ENCODE measurements at regions of chr19 and their contacts with region 1.

Region 1: GRCh38 chr19:32674959-32675719 is at the start of gene ANKRD27:
- DNase-seq: peak; percentile 99
- ATAC-seq: peak; percentile 96
- total RNA-seq, gene ANKRD27: 25.9 TPM

Region 2: DNA sequence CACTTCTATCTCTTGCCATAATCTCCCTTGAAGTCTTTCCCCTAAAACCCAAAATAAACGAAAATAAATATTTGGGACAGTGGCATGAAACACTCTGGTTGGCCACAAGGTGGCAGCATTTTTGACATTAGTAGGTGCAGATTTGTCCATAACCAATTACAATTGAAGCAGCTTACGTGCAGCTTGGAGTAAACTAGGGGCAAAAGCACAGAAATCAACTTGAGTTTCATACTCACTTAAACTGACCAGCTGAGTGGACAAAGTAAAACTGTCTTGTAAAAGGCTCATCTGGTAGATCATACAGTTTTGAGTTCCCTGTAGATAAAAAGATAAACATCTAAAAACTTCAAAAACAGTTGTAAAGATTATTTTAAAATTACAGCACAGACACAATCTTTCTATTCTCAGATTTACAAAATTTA is 75.4 kb before region 1 on chr19:
- intact Hi-C with region 1: loop called (anchors 10 kb)
- DNase-seq: no peak
- ATAC-seq: no peak

Region 3: DNA sequence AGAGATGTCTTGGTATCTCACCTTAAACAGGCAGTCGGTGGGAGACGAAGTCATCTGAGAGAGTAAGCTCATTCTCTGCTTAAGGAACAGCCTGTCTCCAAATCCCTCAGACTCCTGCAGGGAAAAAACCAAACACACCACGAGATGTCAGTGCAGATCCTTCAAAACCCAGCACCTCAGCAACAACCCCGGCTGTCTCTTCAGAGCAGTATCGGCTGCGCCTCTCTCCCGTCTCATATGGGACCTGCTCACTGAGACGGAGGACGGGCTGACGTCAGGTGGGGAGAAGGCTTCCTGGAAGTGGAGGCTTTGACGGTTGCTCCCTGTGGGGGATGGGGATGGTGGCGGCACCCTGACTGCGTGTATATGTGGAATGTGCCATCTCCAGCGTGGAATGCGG is 43.8 kb before region 1 on chr19:
- intact Hi-C with region 1: no loop called
- DNase-seq: no peak
- ATAC-seq: no peak

Region 4: GRCh38 chr19:32649751-32650150 is 25.4 kb before region 1 on chr19:
- intact Hi-C with region 1: loop called (anchors 1 kb)
- DNase-seq: peak; percentile 75
- ATAC-seq: peak; percentile 79

Measured in Right ventricle myocardium inferior (tissue), 1 donor.